ENCODE measurements at regions of chr19 and their contacts with region 1.

Region 1: DNA sequence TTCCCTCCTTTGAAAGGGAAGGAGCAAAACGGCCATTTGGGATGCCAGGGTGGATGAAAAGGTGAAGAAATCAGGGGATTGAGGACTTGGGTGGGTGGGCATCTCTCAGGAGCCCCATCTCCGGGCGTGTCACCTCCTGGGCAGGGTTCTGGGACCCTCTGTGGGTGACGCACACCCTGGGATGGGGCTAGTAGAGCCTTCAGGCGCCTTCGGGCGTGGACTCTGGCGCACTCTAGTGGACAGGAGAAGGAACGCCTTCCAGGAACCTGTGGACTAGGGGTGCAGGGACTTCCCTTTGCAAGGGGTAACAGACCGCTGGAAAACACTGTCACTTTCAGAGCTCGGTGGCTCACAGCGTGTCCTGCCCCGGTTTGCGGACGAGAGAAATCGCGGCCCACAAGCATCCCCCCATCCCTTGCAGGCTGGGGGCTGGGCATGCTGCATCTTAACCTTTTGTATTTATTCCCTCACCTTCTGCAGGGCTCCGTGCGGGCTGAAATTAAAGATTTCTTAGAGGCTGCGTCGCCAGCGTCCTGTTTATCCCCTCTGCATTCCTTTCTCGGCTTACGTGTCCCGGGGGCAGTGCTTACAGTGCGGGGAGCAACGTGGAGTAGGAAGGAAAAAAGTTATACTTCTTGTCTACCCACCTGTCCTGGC is 15.2 kb upstream of the S1PR4 start:
- DNase-seq: peak; percentile 80
- ATAC-seq: peak; percentile 91

Region 2: GRCh38 chr19:2950286-2951124 is 212.9 kb before region 1 on chr19:
- intact Hi-C with region 1: loop called (anchors 5 kb)
- DNase-seq: peak; percentile 100
- ATAC-seq: peak; percentile 98

Region 3: GRCh38 chr19:3336680-3337523 is 173.5 kb after region 1 on chr19:
- intact Hi-C with region 1: no loop called
- DNase-seq: peak; percentile 92
- ATAC-seq: peak; percentile 93